Activated CD8-positive, alpha-beta T cell treated with anti-CD3 and anti-CD28 coated beads for 36 hours (primary cell): ENCODE measurements at regions of chr3 and their contacts with region 1.

Region 1: DNA sequence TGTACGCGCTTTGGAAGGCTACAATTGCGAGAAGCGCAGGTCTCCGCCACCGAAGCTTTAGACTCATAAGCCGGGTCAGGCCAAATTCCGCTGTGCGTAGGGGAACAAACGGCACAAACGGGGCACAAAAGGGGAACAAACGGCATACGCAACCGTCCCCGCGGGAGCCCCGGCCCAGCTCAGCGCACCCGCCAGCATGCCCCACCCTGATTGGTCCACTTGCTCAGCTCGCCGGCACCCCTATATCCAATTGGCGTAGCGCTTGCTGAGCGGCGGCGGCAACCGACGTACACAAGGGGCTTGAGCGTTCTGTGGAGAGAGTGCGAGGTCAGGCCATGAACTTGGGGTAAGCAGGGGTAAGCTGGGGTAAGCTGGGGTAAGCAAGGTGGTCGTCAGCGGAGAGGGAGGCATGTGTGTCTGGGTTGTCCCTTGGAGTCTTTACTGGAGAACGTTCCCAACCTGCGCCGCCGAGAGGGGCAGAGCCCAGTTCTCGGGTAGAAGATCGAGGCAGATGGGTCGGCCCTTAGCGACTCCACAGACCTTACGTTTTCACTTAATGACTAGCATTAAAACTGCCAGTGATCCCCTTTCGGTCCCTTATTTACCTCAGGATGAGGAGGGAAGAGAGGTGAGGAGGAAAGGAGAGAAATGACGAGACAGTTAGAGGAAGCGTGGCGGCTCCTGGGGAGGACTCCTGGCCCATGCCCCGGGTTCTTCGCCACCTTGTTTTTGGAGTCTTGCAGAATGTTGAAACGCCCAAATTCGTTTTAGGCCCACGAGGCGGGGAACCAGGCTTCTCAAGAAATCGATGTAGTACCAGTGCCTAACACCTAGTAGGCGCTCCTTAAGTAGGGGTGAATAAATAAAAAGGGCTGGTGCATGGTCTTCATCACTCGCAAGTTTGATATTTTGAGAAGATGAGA is at the start of gene CCDC66:
- DNase-seq: peak; percentile 97
- ATAC-seq: peak; percentile 98
- H3K4me3 Mint-ChIP-seq: peak within 1 kb of the TSS; percentile 88
- H3K27ac Mint-ChIP-seq: peak within 1 kb of the TSS; percentile 98
- H3K4me1 Mint-ChIP-seq: peaks cover 22% of the 10 kb centered on the region
- H3K27me3 Mint-ChIP-seq: no peaks in the 10 kb centered on the region
- CTCF ChIP-seq: peak; percentile 74
- total RNA-seq, gene CCDC66: 21.1 to 22.1 TPM

Region 2: DNA sequence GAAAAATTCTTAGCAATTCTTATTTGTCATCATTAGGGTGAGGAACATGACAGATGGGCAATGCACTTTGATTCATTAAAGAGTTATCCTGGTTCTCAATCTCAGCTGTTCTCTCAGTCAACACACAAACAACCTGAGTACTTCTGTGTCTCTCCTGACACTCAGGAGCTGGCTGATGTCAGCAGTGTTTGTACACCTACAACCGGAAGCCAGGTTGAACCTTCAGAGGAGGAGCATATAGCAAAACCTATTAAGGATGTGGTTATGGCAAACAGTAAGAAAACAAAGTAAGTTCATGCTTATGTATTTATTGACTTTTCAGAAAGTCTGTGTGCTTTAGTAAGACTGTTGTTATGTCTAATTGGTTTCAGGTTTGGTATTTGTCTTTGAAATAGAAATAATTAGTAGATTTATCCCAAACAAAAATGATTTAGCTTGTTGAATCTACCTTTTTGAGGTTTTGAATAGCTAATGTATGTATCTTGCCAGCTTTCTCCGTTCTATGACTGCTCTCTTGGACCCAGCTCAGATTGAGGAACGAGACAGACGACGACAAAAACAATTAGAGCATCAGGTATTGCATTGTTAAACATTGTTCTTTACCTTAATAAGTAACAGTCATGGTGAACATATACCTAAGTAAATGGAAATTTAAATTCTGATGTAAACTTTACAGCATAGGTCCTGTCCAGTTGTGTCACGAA is 36.4 kb after region 1 on chr3:
- CTCF ChIA-PET with region 1: no interaction called
- POLR2A ChIA-PET with region 1: interaction called, 6 read pairs
- intact Hi-C with region 1: loop called (anchors 5 kb)
- DNase-seq: peak; percentile 61
- ATAC-seq: peak; percentile 100
- H3K4me3 Mint-ChIP-seq: peak overlapping the region; percentile 5
- H3K27ac Mint-ChIP-seq: peak overlapping the region; percentile 84
- H3K4me1 Mint-ChIP-seq: peaks cover 55% of the 10 kb centered on the region
- H3K27me3 Mint-ChIP-seq: no peaks in the 10 kb centered on the region
- CTCF ChIP-seq: no peak